Posterior cingulate gyrus (tissue), 11 donors: ENCODE measurements at regions of chr15 and their contacts with region 1.

Region 1: GRCh38 chr15:38252481-38253412 is at the start of gene SPRED1:
- DNase-seq: peak; percentile 40 to 95 (median 69)

Region 2: GRCh38 chr15:37995461-37996347 is 257.0 kb before region 1 on chr15:
- intact Hi-C with region 1: loop called (anchors 5 kb)
- DNase-seq: peak in 3 of 10 donors; percentile 27 to 86 (median 37)

Region 3: GRCh38 chr15:38072348-38073177 is 180.2 kb before region 1 on chr15:
- intact Hi-C with region 1: loop called (anchors 1 kb)
- DNase-seq: peak; percentile 83 to 99 (median 90)

Region 4: DNA sequence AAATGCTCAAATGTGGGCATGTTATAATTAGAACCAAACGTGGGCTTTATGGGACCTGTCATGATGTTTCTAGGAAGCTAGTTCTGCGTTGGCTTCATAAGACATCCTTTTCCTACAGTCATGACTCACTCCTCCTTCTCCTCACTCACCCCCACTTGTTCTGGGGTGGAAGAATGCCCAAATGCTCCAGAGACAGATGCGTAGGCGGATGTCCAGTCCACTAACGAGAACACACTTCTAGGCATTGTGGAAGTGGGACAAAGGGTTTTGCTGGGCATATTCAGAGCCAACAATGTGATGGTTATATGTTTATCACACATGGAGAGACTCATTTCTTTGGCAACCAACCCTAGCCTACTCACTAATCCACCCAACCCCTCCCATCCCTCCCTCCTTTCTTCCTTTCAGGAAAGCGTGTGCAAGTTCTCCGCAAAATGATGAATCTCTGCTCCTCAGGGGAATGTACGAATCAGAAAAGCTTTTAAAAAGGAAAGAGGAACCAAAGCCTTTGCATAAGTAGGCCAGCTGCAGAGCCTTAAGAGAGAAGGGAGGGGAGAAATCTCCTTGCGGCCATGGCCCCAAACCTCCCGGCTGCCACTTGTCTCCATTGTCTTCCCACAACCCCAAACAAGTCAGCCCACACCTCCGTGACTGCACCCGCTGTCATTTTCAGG is 123.1 kb before region 1 on chr15:
- intact Hi-C with region 1: loop called (anchors 1 kb)
- DNase-seq: peak in 7 of 10 donors; percentile 43 to 89 (median 61)

Region 5: DNA sequence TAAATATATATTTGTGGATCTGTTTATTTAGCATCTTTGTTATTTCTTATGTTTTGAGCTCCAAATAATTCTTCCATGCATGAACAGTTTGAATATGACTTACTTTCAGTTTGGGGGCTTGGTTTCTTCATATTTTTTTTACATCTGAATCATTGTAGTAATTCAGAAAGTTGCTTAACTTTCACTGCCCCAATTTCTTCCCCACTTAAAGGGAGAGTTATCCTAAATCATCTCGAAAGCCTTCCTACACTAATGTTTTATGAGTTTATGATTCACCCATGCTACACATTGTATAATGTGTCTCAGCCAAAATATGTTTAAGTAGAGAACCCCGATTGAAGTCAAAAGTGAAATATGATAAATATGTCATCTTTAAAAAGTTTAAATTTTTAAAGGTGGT is 47.6 kb after region 1 on chr15:
- intact Hi-C with region 1: loop called (anchors 5 kb)
- DNase-seq: no peak

Region 6: DNA sequence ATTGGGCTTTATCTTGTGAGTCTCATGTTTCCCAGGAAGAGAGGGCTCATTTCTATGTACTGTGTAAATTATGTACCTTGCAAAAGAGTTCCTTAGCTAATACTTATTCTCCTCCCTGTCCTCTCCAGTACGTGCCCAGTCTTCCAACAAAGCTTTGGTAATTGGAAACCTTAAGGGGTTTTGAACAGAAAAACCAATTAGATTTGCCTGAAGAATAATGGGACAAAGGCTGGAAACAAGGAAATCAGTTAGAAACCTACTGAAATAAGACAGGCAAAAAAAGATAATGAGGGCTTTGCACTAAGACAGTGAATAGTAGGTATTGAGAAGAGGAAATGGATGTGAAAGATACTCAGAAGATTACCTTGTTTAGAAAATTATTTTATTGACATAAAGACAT is 82.4 kb after region 1 on chr15:
- intact Hi-C with region 1: no loop called
- DNase-seq: no peak

Region 7: GRCh38 chr15:38354315-38354929 is 101.7 kb after region 1 on chr15:
- intact Hi-C with region 1: loop called (anchors 5 kb)
- DNase-seq: peak in 6 of 10 donors; percentile 46 to 88 (median 64)